Posterior cingulate gyrus (tissue), 11 donors: ENCODE measurements at regions of chr12 and their contacts with region 1.

Region 1: GRCh38 chr12:123995023-123995748 is 22.2 kb downstream of the ZNF664 start:
- DNase-seq: no peak

Region 2: DNA sequence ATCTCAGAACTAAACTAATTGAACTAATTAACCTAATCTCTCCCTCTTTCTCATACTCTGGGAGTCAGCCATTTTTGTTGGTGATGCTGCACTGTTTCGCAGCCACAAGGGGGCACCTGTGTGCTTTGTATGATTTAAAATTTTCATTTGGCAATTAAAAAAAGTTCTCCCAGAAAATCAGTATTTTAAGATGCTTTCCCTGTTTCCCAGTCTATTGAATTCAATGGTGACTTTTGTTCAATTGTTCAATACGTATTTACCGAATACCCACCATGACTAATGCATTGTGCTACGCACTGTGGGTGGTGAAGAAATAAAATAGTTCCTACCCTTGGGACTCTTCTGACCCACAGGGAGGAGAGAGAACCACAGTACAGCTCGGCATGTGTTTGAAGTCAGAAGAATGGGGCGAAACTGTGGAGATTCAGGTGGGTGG is 41.5 kb after region 1 on chr12:
- intact Hi-C with region 1: loop called (anchors 5 kb)
- DNase-seq: peak in 6 of 10 donors; percentile 49 to 89 (median 58)

Region 3: GRCh38 chr12:124097701-124098100 is 102.5 kb after region 1 on chr12:
- intact Hi-C with region 1: no loop called
- DNase-seq: no peak

Region 4: DNA sequence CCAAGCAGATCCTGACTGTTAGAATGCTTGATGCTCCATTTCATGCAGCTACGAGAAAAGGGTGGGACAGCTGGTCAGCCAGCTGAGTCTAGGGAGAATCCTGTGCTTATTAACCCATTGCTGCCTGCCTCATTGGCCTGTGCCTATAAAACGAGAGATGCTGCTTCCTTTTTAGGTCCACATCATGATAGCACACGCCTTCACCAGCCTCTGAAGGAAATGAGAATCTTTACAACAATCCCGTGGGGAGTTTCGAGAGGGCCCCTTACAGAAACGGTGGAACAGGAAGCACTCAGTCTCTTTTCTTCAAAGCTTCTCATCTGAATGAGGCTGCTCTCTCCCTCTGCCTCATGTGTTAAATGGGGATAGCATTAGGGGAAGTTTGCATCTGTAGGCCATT is 152.4 kb after region 1 on chr12:
- intact Hi-C with region 1: no loop called
- DNase-seq: no peak